Activated CD4-positive, alpha-beta T cell treated with anti-CD3 and anti-CD28 coated beads for 36 hours (primary cell): ENCODE measurements at regions of chr19 and their contacts with region 1.

Region 1: DNA sequence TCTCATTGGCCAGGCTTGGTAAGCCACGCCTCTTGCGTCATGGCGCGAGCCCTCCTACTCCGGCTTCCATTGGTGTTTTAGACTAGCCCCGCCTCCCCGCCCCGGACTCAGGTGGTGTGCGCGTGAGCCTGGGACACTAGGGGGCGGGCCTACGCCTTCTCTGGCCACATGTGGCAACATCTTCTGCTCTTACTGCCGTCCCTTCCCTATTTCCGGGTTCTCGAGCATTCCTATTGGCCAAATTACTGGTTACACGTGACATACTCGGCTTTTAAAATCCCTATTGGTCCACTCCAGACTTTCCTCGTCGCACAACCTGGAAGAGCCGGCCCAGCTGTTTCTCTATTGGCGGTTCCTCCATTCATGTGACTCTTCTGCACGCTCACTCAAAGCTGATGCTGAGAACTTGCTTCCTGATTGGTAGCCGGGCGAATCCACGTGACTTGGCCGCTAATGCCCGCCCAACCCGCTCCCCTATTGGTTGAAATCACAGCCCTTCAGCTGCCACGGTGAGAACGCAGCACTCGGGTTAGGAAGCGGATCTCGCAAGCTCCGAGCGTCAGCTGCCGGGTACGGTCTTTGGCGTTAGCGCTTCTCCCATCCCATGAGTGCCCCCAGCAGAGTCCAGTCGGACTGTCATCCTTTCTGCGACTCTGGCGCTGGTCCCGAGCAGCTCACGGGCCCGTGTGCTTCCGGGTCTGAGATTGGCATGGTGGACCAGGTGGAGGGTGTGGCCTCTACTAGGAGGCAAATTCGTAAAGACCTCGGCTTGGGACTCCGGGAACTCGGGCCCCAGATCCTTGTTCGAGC is at the start of gene BLOC1S3:
- DNase-seq: peak; percentile 100
- ATAC-seq: peak; percentile 90
- H3K4me3 Mint-ChIP-seq: peak within 1 kb of the TSS; percentile 91
- H3K27ac Mint-ChIP-seq: peak within 1 kb of the TSS; percentile 94
- H3K4me1 Mint-ChIP-seq: peaks cover 29% of the 10 kb centered on the region
- H3K27me3 Mint-ChIP-seq: no peaks in the 10 kb centered on the region
- total RNA-seq, gene BLOC1S3: 10.7 to 11.2 TPM

Region 2: GRCh38 chr19:44845612-44846454 is 332.6 kb before region 1 on chr19 and contains the start of gene NECTIN2:
- CTCF ChIA-PET with region 1: interaction called, 3 read pairs
- POLR2A ChIA-PET with region 1: no interaction called
- intact Hi-C with region 1: loop called in 1 of 2 experiments (anchors 2 kb)
- DNase-seq: peak; percentile 98
- ATAC-seq: peak; percentile 77
- H3K4me3 Mint-ChIP-seq: peak within 1 kb of the TSS; percentile 73
- H3K27ac Mint-ChIP-seq: peak within 1 kb of the TSS; percentile 10
- H3K4me1 Mint-ChIP-seq: peaks cover 21% of the 10 kb centered on the region
- H3K27me3 Mint-ChIP-seq: peaks cover 21% of the 10 kb centered on the region
- total RNA-seq, gene NECTIN2: 0.80 to 0.93 TPM

Region 3: DNA sequence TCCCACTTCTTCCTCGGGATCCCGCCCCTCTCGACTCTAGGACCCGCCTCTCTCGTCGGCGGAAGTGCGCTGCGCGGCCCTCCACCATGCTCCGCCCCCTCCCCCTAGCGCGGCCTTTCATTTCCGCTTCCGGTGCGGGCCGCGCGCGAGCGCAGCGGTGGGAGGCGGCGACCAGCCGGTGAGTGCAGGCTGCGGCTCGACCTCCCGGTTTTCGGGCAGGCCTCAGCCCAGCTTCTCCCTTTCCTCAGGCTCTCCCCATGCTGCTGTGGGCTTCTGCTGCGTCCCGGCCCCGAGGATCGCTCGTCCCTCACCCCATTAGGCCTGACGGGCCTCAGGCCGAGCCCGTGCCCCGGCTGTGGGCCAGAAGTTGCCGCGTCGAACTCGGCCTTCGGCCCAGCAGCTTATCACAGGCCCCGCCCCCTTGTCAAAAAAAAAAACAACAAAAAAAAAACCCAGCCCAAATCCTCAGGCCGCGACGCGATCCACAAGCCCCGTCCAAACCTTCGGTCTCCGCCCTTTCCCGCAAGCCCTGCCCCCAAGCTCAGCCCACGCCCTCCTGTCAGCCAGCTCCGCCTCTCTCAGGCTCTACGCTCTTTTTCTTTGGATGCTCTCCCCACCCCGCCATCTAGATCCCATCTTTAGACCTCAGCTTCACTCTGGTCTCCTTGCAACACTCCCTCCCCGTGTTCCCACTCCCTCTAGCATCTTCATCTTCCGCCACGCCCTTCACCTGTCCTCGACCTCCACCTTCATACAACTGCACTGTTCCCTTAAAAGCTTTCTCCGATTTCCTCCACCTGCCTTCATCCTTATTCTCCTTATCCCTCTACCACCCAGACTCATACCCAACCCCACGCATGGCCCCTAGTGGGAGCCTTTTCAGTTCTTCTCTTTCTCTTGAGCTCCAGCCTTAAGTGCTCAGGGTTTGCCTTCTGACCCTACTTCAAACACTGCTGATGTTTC is 139.3 kb before region 1 on chr19 and contains the start of gene CLASRP:
- CTCF ChIA-PET with region 1: interaction called, 4 read pairs
- POLR2A ChIA-PET with region 1: interaction called, 3 read pairs
- intact Hi-C with region 1: loop called in 1 of 2 experiments (anchors 1 kb)
- DNase-seq: peak; percentile 94
- ATAC-seq: peak; percentile 96
- H3K4me3 Mint-ChIP-seq: peak within 1 kb of the TSS; percentile 97
- H3K27ac Mint-ChIP-seq: peak within 1 kb of the TSS; percentile 96
- H3K4me1 Mint-ChIP-seq: peaks cover 32% of the 10 kb centered on the region
- H3K27me3 Mint-ChIP-seq: no peaks in the 10 kb centered on the region
- total RNA-seq, gene CLASRP: 101 to 103 TPM

Region 4: DNA sequence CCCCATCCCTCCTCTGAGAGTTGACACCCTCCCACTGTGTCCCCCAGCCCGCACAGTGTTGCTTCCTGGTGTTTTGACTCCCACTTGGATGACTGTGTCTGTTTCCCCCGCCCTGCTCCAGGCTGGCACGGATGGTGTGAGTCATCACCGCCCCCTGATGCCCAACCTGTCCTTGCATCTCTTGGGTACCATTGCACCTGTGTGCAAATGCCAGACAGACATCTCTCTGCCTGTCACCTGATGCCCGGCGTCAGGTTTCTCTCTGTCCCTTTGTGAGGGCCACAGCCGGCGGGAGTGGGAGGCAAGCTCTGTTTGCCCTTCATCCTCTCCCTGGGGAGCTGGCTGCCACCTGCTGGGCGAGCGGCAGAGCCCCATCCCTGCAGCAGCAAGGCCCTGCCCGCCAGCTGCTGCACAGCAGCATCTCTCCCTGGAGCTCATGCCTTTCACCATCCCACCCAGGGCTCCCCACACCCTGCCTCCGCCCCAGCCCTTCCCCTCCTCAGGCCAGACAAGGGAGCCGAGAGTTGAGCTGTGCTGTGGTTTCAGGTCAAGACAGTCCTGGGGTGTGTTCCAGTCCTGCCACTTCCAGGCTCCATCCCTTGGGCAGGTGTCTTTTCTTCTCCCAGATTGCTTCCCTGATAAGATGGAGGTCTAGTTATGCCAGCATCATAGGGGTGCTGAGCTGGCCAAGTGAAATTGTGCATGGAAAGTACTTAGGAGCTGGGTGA is 47.4 kb before region 1 on chr19:
- CTCF ChIA-PET with region 1: no interaction called
- POLR2A ChIA-PET with region 1: no interaction called
- intact Hi-C with region 1: no loop called
- DNase-seq: peak; percentile 39
- ATAC-seq: peak; percentile 37
- H3K4me3 Mint-ChIP-seq: no peak overlapping the region
- H3K27ac Mint-ChIP-seq: no peak overlapping the region
- H3K4me1 Mint-ChIP-seq: peaks cover 13% of the 10 kb centered on the region
- H3K27me3 Mint-ChIP-seq: no peaks in the 10 kb centered on the region

Region 5: DNA sequence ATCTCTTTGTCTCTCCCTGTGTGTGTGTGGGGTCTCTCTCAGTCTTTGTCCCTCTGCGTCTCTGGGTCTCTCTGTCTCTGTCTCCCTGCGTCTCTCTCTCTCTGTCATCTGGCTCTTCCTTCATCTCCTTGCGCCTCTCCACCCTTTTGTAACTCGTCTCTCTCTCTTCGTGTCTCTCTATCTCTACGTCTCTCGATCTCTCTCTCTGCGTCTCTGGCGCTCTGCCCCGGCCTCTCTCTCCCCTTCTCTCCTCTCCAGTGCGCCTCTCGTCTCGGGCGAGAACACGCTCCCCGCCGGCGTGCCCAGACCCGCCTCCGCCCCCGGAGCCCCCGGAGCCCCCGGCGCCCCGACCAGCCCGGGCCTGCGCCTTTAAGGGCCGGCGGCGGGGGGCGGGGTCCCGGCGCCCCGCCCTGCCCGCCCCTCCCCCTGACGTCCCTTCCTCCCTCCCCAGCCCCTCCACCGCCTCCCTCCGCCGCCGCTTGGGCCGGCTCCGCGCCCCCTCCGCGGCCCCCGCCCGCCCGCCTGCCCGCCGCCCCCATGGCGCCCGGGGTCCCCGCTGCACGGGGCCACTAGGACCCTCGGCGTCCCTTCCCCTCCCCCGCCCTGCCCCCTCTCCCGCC is 72.5 kb after region 1 on chr19 and contains the start of gene MARK4:
- CTCF ChIA-PET with region 1: interaction called, 6 read pairs
- POLR2A ChIA-PET with region 1: no interaction called
- intact Hi-C with region 1: loop called in 1 of 2 experiments (anchors 1 kb)
- DNase-seq: peak; percentile 72
- ATAC-seq: peak; percentile 67
- H3K4me3 Mint-ChIP-seq: peak within 1 kb of the TSS; percentile 77
- H3K27ac Mint-ChIP-seq: peak within 1 kb of the TSS; percentile 76
- H3K4me1 Mint-ChIP-seq: peaks cover 29% of the 10 kb centered on the region
- H3K27me3 Mint-ChIP-seq: peaks cover 2% of the 10 kb centered on the region
- total RNA-seq, gene MARK4: 19.1 to 19.6 TPM

Region 6: GRCh38 chr19:45643024-45643926 is 464.8 kb after region 1 on chr19:
- CTCF ChIA-PET with region 1: interaction called, 4 read pairs
- POLR2A ChIA-PET with region 1: interaction called, 3 read pairs
- intact Hi-C with region 1: loop called in 1 of 2 experiments (anchors 1 kb)
- DNase-seq: peak; percentile 97
- ATAC-seq: peak; percentile 54
- H3K4me3 Mint-ChIP-seq: peak overlapping the region; percentile 94
- H3K27ac Mint-ChIP-seq: peak overlapping the region; percentile 93
- H3K4me1 Mint-ChIP-seq: peaks cover 57% of the 10 kb centered on the region
- H3K27me3 Mint-ChIP-seq: no peaks in the 10 kb centered on the region

Region 7: GRCh38 chr19:45902651-45903625 is 724.5 kb after region 1 on chr19:
- CTCF ChIA-PET with region 1: no interaction called
- POLR2A ChIA-PET with region 1: no interaction called
- intact Hi-C with region 1: loop called in 1 of 2 experiments (anchors 2 kb)
- DNase-seq: peak; percentile 100
- ATAC-seq: peak; percentile 88
- H3K4me3 Mint-ChIP-seq: peak overlapping the region; percentile 88
- H3K27ac Mint-ChIP-seq: peak overlapping the region; percentile 75
- H3K4me1 Mint-ChIP-seq: peaks cover 16% of the 10 kb centered on the region
- H3K27me3 Mint-ChIP-seq: no peaks in the 10 kb centered on the region